Posterior cingulate gyrus (tissue), 11 donors: ENCODE measurements at regions of chr17 and their contacts with region 1.

Region 1: DNA sequence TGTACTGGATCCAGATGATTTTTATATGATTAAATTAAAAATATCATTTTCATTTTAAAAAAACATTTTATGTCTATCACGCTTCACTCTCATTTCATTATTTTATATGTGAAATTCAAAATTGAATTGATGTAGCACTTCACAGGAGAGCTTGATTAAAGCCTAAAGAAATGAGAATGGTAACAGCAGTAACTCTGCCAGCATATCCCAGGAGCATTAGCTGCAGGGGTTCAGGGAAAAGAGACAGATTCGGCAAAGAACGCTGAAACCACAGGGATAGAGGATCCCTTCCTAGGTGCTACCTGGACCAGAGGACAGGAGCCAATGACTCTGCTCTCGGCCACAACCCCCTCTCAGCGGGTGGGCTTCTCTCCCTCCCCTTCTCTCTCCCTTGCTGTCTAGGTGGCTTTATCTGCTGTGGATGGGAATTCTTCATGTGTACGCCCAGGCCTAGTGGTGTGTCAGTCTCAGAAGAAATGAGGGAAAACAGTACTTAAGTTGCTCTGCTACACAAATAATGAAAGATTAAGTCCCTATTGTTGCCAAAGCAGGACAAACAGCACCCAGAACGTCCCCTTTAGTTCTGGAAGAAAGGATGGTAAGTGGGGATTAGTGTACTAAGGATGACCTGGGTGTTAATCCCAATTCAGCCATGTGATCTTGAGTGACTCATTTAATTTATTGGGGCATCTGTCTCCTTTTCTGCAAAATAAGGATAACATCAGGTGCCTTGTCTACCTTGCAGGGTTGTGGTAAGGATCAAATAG is 123.3 kb downstream of the CDK5R1 start:
- DNase-seq: no peak

Region 2: GRCh38 chr17:32298298-32298697 is 311.8 kb before region 1 on chr17:
- intact Hi-C with region 1: no loop called
- DNase-seq: no peak

Region 3: GRCh38 chr17:32671896-32672295 is 61.8 kb after region 1 on chr17:
- intact Hi-C with region 1: loop called (anchors 10 kb)
- DNase-seq: no peak